Caco-2 (cell line): ENCODE measurements at regions of chr14 and their contacts with region 1.

Region 1: DNA sequence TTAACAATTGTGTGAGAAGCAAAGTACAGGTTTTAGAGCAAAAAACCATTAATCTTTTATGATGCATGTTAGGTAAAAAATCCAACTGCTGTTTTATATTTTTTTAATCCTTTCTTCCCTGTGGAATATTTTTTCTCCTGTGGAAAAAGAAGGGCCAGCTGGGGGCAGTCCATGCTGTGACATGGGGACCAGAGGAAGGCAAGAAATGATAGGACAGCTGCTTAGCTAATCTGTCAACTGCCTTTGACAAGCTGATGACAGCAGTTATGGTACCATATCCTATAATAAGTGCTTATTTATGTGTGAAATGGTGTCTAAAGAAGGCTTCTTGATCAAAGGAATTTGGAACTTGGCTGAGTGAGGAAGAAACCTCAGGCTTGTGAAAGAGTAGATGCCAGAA is 452.4 kb upstream of the NOVA1 start:
- DNase-seq: no peak
- H3K4me3 ChIP-seq: no peak overlapping the region
- H3K4me3 Mint-ChIP-seq: no peak overlapping the region
- H3K27ac Mint-ChIP-seq: no peak overlapping the region
- H3K4me1 ChIP-seq: peaks cover 10% of the 10 kb centered on the region; the same call in 1 of the 2 replicates
- H3K4me1 Mint-ChIP-seq: no peaks in the 10 kb centered on the region
- H3K27me3 ChIP-seq: no peaks in the 10 kb centered on the region
- H3K27me3 Mint-ChIP-seq: no peaks in the 10 kb centered on the region
- CTCF ChIP-seq: no peak

Region 2: GRCh38 chr14:26896447-26896846 is 153.7 kb before region 1 on chr14:
- CTCF ChIA-PET with region 1: no interaction called
- POLR2A ChIA-PET with region 1: no interaction called
- intact Hi-C with region 1: no loop called
- DNase-seq: no peak
- H3K4me3 ChIP-seq: no peak overlapping the region
- H3K4me3 Mint-ChIP-seq: no peak overlapping the region
- H3K27ac Mint-ChIP-seq: no peak overlapping the region
- H3K4me1 ChIP-seq: no peaks in the 10 kb centered on the region
- H3K4me1 Mint-ChIP-seq: no peaks in the 10 kb centered on the region
- H3K27me3 ChIP-seq: no peaks in the 10 kb centered on the region
- H3K27me3 Mint-ChIP-seq: no peaks in the 10 kb centered on the region
- CTCF ChIP-seq: no peak

Region 3: DNA sequence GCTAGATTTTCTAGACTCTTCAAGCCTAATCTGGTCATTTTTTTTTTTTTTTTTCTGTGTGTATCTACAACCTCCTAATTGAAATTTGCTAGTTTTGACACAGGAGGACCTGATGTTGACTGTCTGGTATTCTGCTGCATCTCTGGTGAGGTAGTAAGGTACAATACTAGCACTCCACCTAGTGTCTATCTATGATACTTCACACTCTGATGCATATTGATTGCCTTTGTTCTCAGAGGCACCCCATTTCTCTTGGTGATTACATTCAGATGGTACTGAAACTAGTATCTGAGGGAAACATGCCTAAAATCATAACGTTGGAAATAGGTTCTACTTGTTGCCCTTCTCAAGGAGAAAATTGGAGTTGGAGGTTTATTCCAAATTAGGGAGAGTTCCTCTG is 478.1 kb after region 1 on chr14:
- CTCF ChIA-PET with region 1: no interaction called
- POLR2A ChIA-PET with region 1: no interaction called
- intact Hi-C with region 1: loop called (anchors 1 kb)
- DNase-seq: peak in 1 of 2 experiments; percentile 40
- H3K4me3 ChIP-seq: no peak overlapping the region
- H3K4me3 Mint-ChIP-seq: no peak overlapping the region
- H3K27ac Mint-ChIP-seq: no peak overlapping the region
- H3K4me1 ChIP-seq: no peaks in the 10 kb centered on the region
- H3K4me1 Mint-ChIP-seq: no peaks in the 10 kb centered on the region
- H3K27me3 ChIP-seq: no peaks in the 10 kb centered on the region
- H3K27me3 Mint-ChIP-seq: no peaks in the 10 kb centered on the region
- CTCF ChIP-seq: peak; percentile 45 to 68